Psoas muscle (tissue), 8 donors: ENCODE measurements at regions of chr15 and their contacts with region 1.

Region 1: GRCh38 chr15:63449731-63450130 is 54.7 kb upstream of the USP3 start:
- DNase-seq: no peak
- ATAC-seq: no peak
- H3K4me3 ChIP-seq: no peak overlapping the region
- H3K27ac ChIP-seq: no peak overlapping the region
- H3K4me1 ChIP-seq: no peaks in the 10 kb centered on the region
- H3K27me3 ChIP-seq: no peaks in the 10 kb centered on the region
- CTCF ChIP-seq: no peak

Region 2: DNA sequence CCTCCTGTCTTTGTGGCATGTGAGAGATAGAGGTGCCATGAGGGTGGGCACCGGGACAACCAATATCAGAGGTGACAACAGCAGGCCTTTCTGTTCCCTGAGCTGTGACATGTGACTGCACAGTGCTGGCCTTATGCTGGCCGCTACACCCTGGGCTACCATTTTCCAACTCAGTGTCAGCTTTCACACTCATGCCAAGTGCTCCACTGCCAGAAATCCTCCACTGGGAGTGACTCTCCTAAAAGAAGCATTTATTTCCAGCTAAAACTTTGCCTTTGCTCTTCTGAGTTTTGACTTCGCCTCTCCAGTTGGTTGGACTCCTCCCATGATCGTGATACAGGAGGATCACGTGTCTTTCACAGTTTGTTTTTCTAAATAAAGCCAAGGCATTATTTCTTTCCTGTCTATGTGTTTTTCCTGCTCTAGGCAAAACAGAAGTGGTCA is 99.5 kb before region 1 on chr15:
- intact Hi-C with region 1: loop called in 1 of 2 experiments (anchors 10 kb)
- DNase-seq: peak; percentile 50 to 76
- ATAC-seq: peak; percentile 72 to 83 (median 78)
- H3K4me3 ChIP-seq: no peak overlapping the region
- H3K27ac ChIP-seq: peak overlapping the region; percentile 28
- H3K4me1 ChIP-seq: peaks cover 5% of the 10 kb centered on the region
- H3K27me3 ChIP-seq: no peaks in the 10 kb centered on the region
- CTCF ChIP-seq: no peak

Region 3: DNA sequence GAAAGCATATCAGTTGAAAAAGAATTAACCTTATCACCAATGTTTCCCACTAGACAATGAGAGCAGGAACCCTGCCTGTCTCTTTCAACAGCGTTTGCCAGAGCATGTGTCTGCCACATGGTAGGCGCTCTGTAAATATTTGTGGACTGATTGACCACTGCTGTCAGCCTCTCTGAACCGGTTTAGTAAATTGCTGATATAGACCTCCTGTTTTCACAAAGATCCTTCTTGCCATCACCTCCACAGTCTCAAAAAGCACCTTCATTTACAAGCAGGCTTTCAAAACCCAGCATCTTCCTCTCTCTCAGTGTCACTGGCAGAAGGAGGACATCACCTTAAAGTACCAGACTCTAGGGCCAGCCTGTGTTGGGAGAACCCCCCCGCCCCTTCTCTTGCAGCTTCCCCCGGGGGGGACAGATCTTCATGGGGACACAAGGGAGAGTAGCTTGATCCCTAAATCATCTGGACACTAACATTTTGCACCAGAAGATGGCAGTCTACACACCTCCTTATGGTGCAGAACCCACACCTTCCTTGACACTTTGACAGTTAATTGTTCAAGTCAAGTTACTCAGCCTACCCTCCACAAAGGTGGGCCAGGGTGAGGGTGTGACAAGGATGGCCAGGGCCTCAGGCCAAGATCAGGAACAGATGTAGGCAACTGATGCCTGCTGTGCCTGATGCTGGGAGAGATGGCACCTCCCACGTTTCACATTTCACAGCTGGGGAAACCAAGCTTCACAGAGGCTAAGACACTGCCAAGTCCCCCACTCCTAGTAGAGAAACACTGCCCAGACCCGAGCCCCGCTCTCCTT is 16.9 kb after region 1 on chr15:
- intact Hi-C with region 1: no loop called
- DNase-seq: no peak
- ATAC-seq: peak; percentile 78 to 92 (median 86)
- H3K4me3 ChIP-seq: no peak overlapping the region
- H3K27ac ChIP-seq: no peak overlapping the region
- H3K4me1 ChIP-seq: no peaks in the 10 kb centered on the region
- H3K27me3 ChIP-seq: no peaks in the 10 kb centered on the region
- CTCF ChIP-seq: peak; percentile 59

Region 4: GRCh38 chr15:63626955-63627354 is 177.2 kb after region 1 on chr15:
- intact Hi-C with region 1: no loop called
- DNase-seq: no peak
- ATAC-seq: no peak
- H3K4me3 ChIP-seq: no peak overlapping the region
- H3K27ac ChIP-seq: no peak overlapping the region
- H3K4me1 ChIP-seq: no peaks in the 10 kb centered on the region
- H3K27me3 ChIP-seq: no peaks in the 10 kb centered on the region
- CTCF ChIP-seq: no peak